Esophagus squamous epithelium (tissue), 5 donors: ENCODE measurements at regions of chr1 and their contacts with region 1.

Region 1: GRCh38 chr1:22976461-22977243 is 4.0 kb upstream of the LACTBL1 start:
- DNase-seq: peak; percentile 10
- H3K4me3 ChIP-seq: no peak overlapping the region
- H3K27ac ChIP-seq: no peak overlapping the region
- H3K4me1 ChIP-seq: peaks cover 0 to 10% (median 0%) of the 10 kb centered on the region in 3 donors
- H3K27me3 ChIP-seq: peaks cover 0 to 37% (median 0%) of the 10 kb centered on the region in 4 donors
- CTCF ChIP-seq: peak; percentile 48 to 92 (median 74)
- POLR2A ChIP-seq: no peak

Region 2: DNA sequence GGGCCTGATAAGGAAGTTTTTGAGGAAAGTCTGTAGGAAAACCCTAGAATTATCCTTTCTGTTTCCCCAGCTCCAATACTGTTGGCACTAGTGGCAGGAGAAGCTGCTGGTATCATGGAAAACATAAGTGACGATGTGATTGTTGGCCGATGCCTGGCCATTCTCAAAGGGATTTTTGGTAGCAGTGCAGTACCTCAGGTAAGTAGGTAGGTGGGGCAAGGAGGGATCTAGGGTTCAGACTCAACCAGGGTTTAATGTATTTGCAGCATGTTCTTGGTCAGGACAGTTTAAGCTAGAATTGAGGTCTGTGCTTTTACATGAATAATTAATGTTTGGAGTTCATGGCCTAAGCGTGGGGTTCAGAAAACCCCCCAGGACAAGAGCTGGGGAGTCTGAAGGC is 104.7 kb after region 1 on chr1:
- intact Hi-C with region 1: loop called (anchors 10 kb)
- DNase-seq: no peak
- H3K4me3 ChIP-seq: no peak overlapping the region
- H3K27ac ChIP-seq: no peak overlapping the region
- H3K4me1 ChIP-seq: peaks cover 0 to 8% (median 0%) of the 10 kb centered on the region in 3 donors
- H3K27me3 ChIP-seq: no peaks in the 10 kb centered on the region
- CTCF ChIP-seq: peak in 4 of 6 experiments; percentile 11 to 45 (median 26)
- POLR2A ChIP-seq: no peak

Region 3: DNA sequence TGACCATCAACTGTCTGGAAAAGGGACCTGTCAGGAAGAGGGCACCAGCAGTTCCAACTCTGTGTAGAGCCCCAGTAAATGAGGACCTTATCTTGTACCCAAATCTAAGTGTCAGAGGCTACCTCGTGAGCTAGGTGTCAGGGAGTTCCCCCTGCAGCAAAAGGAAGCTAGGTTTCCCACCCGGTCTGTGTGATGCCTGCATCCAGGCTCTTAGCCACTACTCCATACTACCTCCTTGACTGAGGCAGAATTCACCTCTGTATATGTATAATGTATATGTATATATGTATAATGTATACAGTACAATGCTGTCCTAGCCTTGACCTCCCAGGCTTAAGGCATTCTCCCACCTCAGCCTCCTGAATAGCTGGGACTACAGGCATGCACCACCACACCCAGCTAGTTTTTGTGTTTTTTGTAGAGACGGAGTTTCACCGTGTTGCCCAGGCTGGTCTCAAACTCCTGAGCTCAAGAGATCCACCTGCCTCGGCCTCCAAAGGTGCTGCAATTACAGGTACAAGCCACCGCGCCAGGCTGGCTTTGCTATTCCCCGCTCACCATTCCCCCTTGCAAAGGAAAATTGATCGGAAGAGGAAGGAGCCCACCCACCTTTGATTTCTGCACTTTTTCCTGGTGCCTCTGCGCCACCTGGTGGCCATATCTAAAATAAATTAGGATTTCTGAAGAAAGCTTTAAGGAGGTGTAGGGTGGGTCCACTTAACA is 207.7 kb after region 1 on chr1:
- intact Hi-C with region 1: loop called (anchors 10 kb)
- DNase-seq: no peak
- H3K4me3 ChIP-seq: peak overlapping the region in 3 of 4 donors; percentile 20 to 58 (median 34)
- H3K27ac ChIP-seq: no peak overlapping the region
- H3K4me1 ChIP-seq: peaks cover 4 to 8% (median 6%) of the 10 kb centered on the region in 3 donors
- H3K27me3 ChIP-seq: no peaks in the 10 kb centered on the region
- CTCF ChIP-seq: peak; percentile 55 to 93 (median 89)
- POLR2A ChIP-seq: no peak